H1 (cell line): ENCODE measurements at regions of chr12 and their contacts with region 1.

Region 1: GRCh38 chr12:15772405-15773018 is 16.7 kb downstream of the EPS8 start:
- DNase-seq: no peak
- H3K4me3 ChIP-seq: no peak overlapping the region
- H3K27ac ChIP-seq: no peak overlapping the region
- H3K4me1 ChIP-seq: peaks cover 0 to 4% (median 3%) of the 10 kb centered on the region in 4 experiments; a peak in 4 of 7 replicates
- H3K27me3 ChIP-seq: no peaks in the 10 kb centered on the region
- CTCF ChIP-seq: peak in 2 of 3 experiments; percentile 27 to 47; a peak in 2 of 4 replicates
- EP300 ChIP-seq: no peak
- POLR2A ChIP-seq: no peak
- RAD21 ChIP-seq: peak; percentile 38 to 43

Region 2: GRCh38 chr12:15515010-15515409 is 257.5 kb before region 1 on chr12:
- CTCF ChIA-PET with region 1: no interaction called
- POLR2A ChIA-PET with region 1: no interaction called
- DNase-seq: no peak
- H3K4me3 ChIP-seq: no peak overlapping the region
- H3K27ac ChIP-seq: no peak overlapping the region
- H3K4me1 ChIP-seq: no peaks in the 10 kb centered on the region
- H3K27me3 ChIP-seq: no peaks in the 10 kb centered on the region
- CTCF ChIP-seq: no peak
- EP300 ChIP-seq: no peak
- POLR2A ChIP-seq: no peak
- RAD21 ChIP-seq: no peak

Region 3: GRCh38 chr12:15752785-15753184 is 19.7 kb before region 1 on chr12:
- CTCF ChIA-PET with region 1: interaction called, 15 read pairs
- POLR2A ChIA-PET with region 1: no interaction called
- DNase-seq: no peak
- H3K4me3 ChIP-seq: no peak overlapping the region
- H3K27ac ChIP-seq: no peak overlapping the region
- H3K4me1 ChIP-seq: peaks cover 0 to 4% (median 0%) of the 10 kb centered on the region in 4 experiments; a peak in 1 of 7 replicates
- H3K27me3 ChIP-seq: no peaks in the 10 kb centered on the region
- CTCF ChIP-seq: no peak
- EP300 ChIP-seq: no peak
- POLR2A ChIP-seq: no peak
- RAD21 ChIP-seq: no peak

Region 4: GRCh38 chr12:15789220-15790171 is 17.0 kb after region 1 on chr12 and contains the start of gene EPS8:
- CTCF ChIA-PET with region 1: interaction called, 12 read pairs
- POLR2A ChIA-PET with region 1: interaction called, 13 read pairs
- DNase-seq: peak; percentile 74 to 98
- H3K4me3 ChIP-seq: peak within 1 kb of the TSS; percentile 79 to 84 (median 82)
- H3K27ac ChIP-seq: no peak within 1 kb of the TSS; the same call in 1 of the 2 replicates
- H3K4me1 ChIP-seq: peaks cover 0 to 6% (median 4%) of the 10 kb centered on the region in 4 experiments; a peak in 5 of 7 replicates
- H3K27me3 ChIP-seq: peaks cover 0 to 21% (median 13%) of the 10 kb centered on the region in 4 experiments; a peak in 6 of 7 replicates
- CTCF ChIP-seq: no peak
- EP300 ChIP-seq: no peak
- POLR2A ChIP-seq: no peak; a peak in 2 of 3 replicates
- RAD21 ChIP-seq: no peak
- total RNA-seq, gene EPS8: 4.6 and 6.5 TPM in 2 replicates